ENCODE measurements at regions of chr9 and their contacts with region 1.

Region 1: DNA sequence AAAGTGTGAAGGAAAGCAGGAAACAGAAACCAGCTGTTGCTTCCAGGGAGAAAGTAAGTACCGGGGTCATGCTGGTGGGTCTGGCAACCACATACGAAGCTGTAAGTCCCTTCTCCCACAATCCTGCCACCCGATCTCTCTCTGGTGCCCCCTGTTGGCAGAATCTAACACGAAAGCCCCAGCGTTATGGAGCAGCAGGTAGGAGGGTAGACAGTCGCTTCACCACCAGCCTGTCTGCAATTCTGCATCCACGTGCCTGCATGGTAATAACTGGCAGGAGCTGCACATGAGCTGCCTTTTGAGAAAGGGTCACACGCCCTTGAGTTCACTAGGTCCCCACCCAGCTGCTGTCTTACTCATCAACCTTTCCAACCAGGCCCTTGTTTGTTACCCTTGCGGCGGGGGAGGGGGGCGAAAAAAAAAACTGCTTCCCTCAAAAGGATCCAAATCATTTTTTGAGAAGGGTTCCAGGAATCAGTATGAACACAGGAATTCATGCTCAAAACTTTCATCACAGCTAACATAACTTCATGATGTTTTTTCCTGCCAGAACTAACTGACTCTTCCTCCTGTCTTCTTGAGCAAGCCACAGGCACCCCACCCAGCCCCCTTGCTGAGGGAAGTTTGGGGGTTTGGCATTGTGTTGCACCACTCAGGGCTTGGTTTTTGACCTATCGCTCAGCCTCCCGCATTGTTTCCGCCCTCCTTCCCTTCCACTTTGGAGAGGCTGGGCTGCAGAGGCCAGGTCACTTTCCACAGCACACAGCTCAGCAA is 19.6 kb upstream of the TMEM252 start:
- DNase-seq: peak; percentile 76
- H3K4me3 Mint-ChIP-seq: no peak overlapping the region
- H3K27ac Mint-ChIP-seq: no peak overlapping the region
- H3K4me1 Mint-ChIP-seq: peaks cover 8% of the 10 kb centered on the region
- H3K27me3 Mint-ChIP-seq: peaks cover 28% of the 10 kb centered on the region

Region 2: GRCh38 chr9:68574150-68574549 is 13.9 kb after region 1 on chr9:
- CTCF ChIA-PET with region 1: interaction called, 10 read pairs
- intact Hi-C with region 1: no loop called
- DNase-seq: no peak
- H3K4me3 Mint-ChIP-seq: no peak overlapping the region
- H3K27ac Mint-ChIP-seq: no peak overlapping the region
- H3K4me1 Mint-ChIP-seq: no peaks in the 10 kb centered on the region
- H3K27me3 Mint-ChIP-seq: peaks cover 15% of the 10 kb centered on the region